ENCODE measurements at regions of chr18 and their contacts with region 1.

Region 1: GRCh38 chr18:6521795-6522418 is 107.2 kb upstream of the L3MBTL4 start:
- DNase-seq: peak; percentile 83
- ATAC-seq: peak; percentile 87
- H3K4me3 Mint-ChIP-seq: no peak overlapping the region
- H3K27ac Mint-ChIP-seq: no peak overlapping the region
- H3K4me1 Mint-ChIP-seq: 0 out of 2 replicates have a peak, but pooled peaks cover 2% of the 10 kb centered on the region
- H3K27me3 Mint-ChIP-seq: no peaks in the 10 kb centered on the region
- CTCF ChIP-seq: peak; percentile 89

Region 2: DNA sequence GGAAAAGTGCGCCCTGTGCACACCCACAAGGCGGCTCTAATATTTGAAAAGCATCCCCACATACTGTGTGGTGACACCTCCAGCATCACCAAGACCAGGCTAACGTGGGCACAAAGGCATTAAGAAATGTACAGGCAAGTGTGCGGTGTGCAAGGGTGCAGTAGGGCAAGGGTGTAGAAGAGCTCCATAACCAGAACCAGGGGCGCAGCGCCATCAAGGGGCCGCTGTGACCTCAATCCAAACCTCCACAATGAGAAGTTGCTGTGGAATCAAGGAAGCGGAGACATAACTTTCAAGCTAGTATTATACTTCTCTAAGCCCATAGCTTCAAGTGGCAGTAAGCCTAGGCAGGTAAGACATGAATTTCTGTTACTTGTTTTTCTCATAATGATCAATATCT is 120.2 kb before region 1 on chr18:
- CTCF ChIA-PET with region 1: interaction called, 14 read pairs
- POLR2A ChIA-PET with region 1: no interaction called
- DNase-seq: peak; percentile 50
- ATAC-seq: peak; percentile 84
- H3K4me3 Mint-ChIP-seq: no peak overlapping the region
- H3K27ac Mint-ChIP-seq: no peak overlapping the region
- H3K4me1 Mint-ChIP-seq: peaks cover 10% of the 10 kb centered on the region
- H3K27me3 Mint-ChIP-seq: no peaks in the 10 kb centered on the region
- CTCF ChIP-seq: 0 out of 2 replicates have a peak, but pooled peaks have one; percentile 26

Region 3: DNA sequence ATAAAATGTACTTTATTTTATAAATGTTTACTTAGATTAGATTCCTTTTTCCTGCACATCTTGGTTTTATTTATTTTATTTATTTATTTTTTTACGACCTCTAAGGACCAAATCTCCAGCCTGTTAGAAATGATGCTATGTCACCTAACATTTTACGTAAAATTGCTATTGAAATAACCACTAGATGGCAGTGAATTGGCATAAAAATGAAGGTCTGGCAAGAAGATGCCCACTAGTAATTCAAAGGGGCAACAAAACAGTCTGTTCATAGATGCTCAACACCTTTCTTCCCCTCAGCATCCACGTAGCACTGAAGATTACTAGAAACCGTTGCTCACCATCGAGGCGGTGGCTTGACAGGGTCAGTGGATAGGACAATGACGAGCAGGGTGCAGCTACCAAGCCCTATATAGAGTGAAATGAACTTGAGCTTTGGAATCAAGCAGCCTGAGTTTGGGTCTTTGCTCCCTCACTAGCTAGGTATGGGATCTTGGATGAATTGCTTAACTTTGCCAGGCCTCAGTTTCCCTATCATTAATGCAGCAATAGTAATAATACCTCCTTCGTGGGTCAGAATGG is 21.5 kb after region 1 on chr18:
- CTCF ChIA-PET with region 1: interaction called, 14 read pairs
- POLR2A ChIA-PET with region 1: no interaction called
- DNase-seq: no peak
- ATAC-seq: peak; percentile 21
- H3K4me3 Mint-ChIP-seq: no peak overlapping the region
- H3K27ac Mint-ChIP-seq: no peak overlapping the region
- H3K4me1 Mint-ChIP-seq: peaks cover 30% of the 10 kb centered on the region
- H3K27me3 Mint-ChIP-seq: no peaks in the 10 kb centered on the region
- CTCF ChIP-seq: peak; percentile 44

Region 4: GRCh38 chr18:6885992-6886796 is 364.3 kb after region 1 on chr18:
- CTCF ChIA-PET with region 1: interaction called, 18 read pairs
- POLR2A ChIA-PET with region 1: no interaction called
- DNase-seq: peak; percentile 37
- ATAC-seq: peak; percentile 72
- H3K4me3 Mint-ChIP-seq: no peak overlapping the region
- H3K27ac Mint-ChIP-seq: no peak overlapping the region
- H3K4me1 Mint-ChIP-seq: peaks cover 16% of the 10 kb centered on the region
- H3K27me3 Mint-ChIP-seq: no peaks in the 10 kb centered on the region
- CTCF ChIP-seq: peak; percentile 60

Measured in WTC11 (cell line).